ENCODE measurements at regions of chr12 and their contacts with region 1.

Region 1: DNA sequence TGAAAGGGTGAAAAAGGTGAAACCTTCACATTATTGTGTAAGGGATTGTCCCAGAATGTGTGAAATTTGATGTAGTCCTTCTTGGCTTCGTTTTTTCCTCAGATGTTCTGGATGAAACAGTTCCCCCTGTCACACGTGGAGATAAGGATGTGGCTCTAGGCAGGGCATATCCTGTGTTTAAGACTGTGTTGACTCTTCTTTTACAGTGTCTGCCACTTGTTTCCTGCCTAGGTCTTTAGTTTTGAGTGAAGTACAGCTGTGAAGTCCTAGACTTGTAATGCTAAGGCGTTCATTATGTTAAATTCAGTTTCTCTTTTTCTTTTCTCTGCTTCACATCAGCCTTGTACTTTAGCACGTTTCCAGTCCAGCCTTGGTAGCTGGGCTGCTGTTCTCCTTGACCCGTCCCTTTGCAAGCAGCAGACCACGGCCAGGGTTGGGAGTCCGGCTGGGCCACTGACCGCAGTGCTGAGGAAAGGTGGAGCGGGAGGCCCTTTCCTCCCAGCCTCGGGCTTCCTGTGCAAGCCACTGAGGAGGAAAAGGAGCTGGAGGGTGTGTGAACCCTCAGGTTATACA is 59.1 kb downstream of the RASSF3 start:
- DNase-seq: peak; percentile 82 to 87 (median 83)
- H3K4me3 ChIP-seq: peak overlapping the region; percentile 48 to 61
- H3K4me3 Mint-ChIP-seq: peak overlapping the region; percentile 88 to 96 (median 92)
- H3K27ac ChIP-seq: peak overlapping the region; percentile 77
- H3K27ac Mint-ChIP-seq: peak overlapping the region; percentile 92 to 99 (median 98)
- H3K4me1 ChIP-seq: peaks cover 100% of the 10 kb centered on the region
- H3K4me1 Mint-ChIP-seq: peaks cover 76 to 98% (median 87%) of the 10 kb centered on the region in 4 donors
- H3K27me3 ChIP-seq: no peaks in the 10 kb centered on the region
- H3K27me3 Mint-ChIP-seq: no peaks in the 10 kb centered on the region

Region 2: GRCh38 chr12:64551698-64552097 is 117.7 kb before region 1 on chr12:
- CTCF ChIA-PET with region 1: interaction called, 20 read pairs
- POLR2A ChIA-PET with region 1: interaction called, 4 read pairs
- intact Hi-C with region 1: no loop called
- DNase-seq: no peak
- H3K4me3 ChIP-seq: no peak overlapping the region
- H3K4me3 Mint-ChIP-seq: no peak overlapping the region
- H3K27ac ChIP-seq: no peak overlapping the region
- H3K27ac Mint-ChIP-seq: no peak overlapping the region
- H3K4me1 ChIP-seq: peaks cover 8% of the 10 kb centered on the region
- H3K4me1 Mint-ChIP-seq: peaks cover 5 to 9% (median 6%) of the 10 kb centered on the region in 4 donors
- H3K27me3 ChIP-seq: no peaks in the 10 kb centered on the region
- H3K27me3 Mint-ChIP-seq: no peaks in the 10 kb centered on the region

Region 3: DNA sequence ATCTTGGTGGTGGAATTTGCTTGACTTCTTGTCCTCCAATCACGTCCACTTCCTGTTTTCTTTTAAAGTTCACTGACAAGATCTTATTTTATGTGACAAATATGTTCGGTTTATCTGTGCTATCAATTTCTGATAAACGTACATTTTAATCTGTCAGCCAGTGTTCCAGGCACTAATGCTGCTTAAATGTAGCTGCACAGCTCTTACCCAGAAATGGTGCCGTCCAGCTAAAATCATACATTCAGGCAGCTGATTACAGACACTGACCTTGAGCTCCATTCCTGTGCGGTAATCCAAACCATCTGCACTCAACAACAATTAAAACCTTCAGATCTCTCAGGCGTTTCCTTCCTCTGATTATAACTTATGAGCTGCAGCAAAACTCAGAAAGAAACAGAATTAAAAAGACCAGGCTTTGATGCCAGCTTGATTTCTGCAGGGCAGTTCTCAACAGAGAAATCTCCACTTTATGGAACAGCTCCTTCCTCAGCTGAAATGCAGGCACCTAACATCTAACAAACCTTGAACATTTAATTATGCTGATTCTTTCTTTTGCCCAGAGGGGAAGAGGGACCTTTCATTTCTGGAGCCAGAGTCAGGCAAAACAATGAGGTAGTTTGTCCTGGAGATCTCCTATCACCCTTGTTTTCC is 85.5 kb before region 1 on chr12:
- CTCF ChIA-PET with region 1: interaction called, 5 read pairs
- POLR2A ChIA-PET with region 1: interaction called, 10 read pairs
- intact Hi-C with region 1: no loop called
- DNase-seq: peak in 4 of 5 donors; percentile 19 to 27 (median 24)
- H3K4me3 ChIP-seq: peak overlapping the region; percentile 36 to 55
- H3K4me3 Mint-ChIP-seq: peak overlapping the region; percentile 40 to 79 (median 74)
- H3K27ac ChIP-seq: peak overlapping the region; percentile 0
- H3K27ac Mint-ChIP-seq: peak overlapping the region; percentile 38 to 89 (median 75)
- H3K4me1 ChIP-seq: peaks cover 35% of the 10 kb centered on the region
- H3K4me1 Mint-ChIP-seq: peaks cover 21 to 40% (median 29%) of the 10 kb centered on the region in 4 donors
- H3K27me3 ChIP-seq: no peaks in the 10 kb centered on the region
- H3K27me3 Mint-ChIP-seq: no peaks in the 10 kb centered on the region

Region 4: DNA sequence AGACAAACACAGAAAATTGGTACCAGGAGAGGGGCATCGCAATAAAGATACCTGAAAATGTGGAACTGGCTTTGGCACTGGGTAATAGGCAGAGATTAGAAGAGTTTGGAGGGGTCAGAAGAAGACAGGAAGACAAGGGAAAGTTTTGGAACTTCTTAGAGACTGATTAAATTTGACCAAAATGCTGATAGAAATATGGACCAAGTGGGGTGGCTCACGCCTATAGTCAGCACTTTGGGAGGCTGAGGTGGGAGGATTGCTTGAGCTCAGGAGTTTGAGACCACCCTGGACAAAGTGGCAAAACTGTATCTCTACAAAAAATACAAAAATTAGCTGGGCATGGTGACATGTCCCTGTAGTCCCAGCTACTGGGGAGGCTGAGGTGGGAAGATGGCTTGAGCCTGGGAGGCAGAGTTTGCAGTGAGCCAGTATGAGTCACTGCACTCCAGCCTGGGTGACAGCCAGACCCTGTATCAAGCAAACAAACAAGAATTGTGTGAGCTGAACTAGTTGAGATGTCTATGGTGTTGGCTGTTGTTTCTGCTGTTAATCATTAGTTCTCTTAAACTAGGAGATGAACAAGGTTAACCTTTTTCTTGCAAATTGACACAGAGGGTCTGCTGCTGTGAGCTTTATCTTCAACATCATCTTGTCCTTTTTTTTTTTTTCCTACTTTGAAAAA is 35.6 kb before region 1 on chr12:
- CTCF ChIA-PET with region 1: interaction called, 7 read pairs
- POLR2A ChIA-PET with region 1: interaction called, 15 read pairs
- intact Hi-C with region 1: no loop called
- DNase-seq: peak in 1 of 5 donors; percentile 47
- H3K4me3 ChIP-seq: no peak overlapping the region
- H3K4me3 Mint-ChIP-seq: peak overlapping the region in 7 of 8 donors; percentile 5 to 73 (median 30)
- H3K27ac ChIP-seq: no peak overlapping the region
- H3K27ac Mint-ChIP-seq: peak overlapping the region; percentile 29 to 88 (median 77)
- H3K4me1 ChIP-seq: peaks cover 92% of the 10 kb centered on the region
- H3K4me1 Mint-ChIP-seq: peaks cover 60 to 92% (median 72%) of the 10 kb centered on the region in 4 donors
- H3K27me3 ChIP-seq: no peaks in the 10 kb centered on the region
- H3K27me3 Mint-ChIP-seq: no peaks in the 10 kb centered on the region

Region 5: GRCh38 chr12:64650762-64651161 is 18.6 kb before region 1 on chr12:
- CTCF ChIA-PET with region 1: interaction called, 3 read pairs
- POLR2A ChIA-PET with region 1: interaction called, 10 read pairs
- intact Hi-C with region 1: loop called (anchors 1 kb)
- DNase-seq: no peak
- H3K4me3 ChIP-seq: no peak overlapping the region
- H3K4me3 Mint-ChIP-seq: peak overlapping the region in 4 of 8 donors; percentile 10 to 49 (median 28)
- H3K27ac ChIP-seq: no peak overlapping the region
- H3K27ac Mint-ChIP-seq: peak overlapping the region; percentile 24 to 89 (median 77)
- H3K4me1 ChIP-seq: peaks cover 88% of the 10 kb centered on the region
- H3K4me1 Mint-ChIP-seq: peaks cover 59 to 88% (median 75%) of the 10 kb centered on the region in 4 donors
- H3K27me3 ChIP-seq: no peaks in the 10 kb centered on the region
- H3K27me3 Mint-ChIP-seq: no peaks in the 10 kb centered on the region

Region 6: GRCh38 chr12:64679487-64679983 is 10.2 kb after region 1 on chr12:
- CTCF ChIA-PET with region 1: interaction called, 85 read pairs
- POLR2A ChIA-PET with region 1: interaction called, 405 read pairs
- intact Hi-C with region 1: loop called (anchors 1 kb)
- DNase-seq: peak; percentile 73 to 86 (median 80)
- H3K4me3 ChIP-seq: peak overlapping the region in 1 of 2 donors; percentile 36
- H3K4me3 Mint-ChIP-seq: peak overlapping the region; percentile 76 to 85 (median 79)
- H3K27ac ChIP-seq: peak overlapping the region; percentile 75
- H3K27ac Mint-ChIP-seq: peak overlapping the region; percentile 94 to 98 (median 97)
- H3K4me1 ChIP-seq: peaks cover 99% of the 10 kb centered on the region
- H3K4me1 Mint-ChIP-seq: peaks cover 67 to 100% (median 86%) of the 10 kb centered on the region in 4 donors
- H3K27me3 ChIP-seq: no peaks in the 10 kb centered on the region
- H3K27me3 Mint-ChIP-seq: no peaks in the 10 kb centered on the region

Region 7: GRCh38 chr12:64687816-64688215 is 18.5 kb after region 1 on chr12:
- CTCF ChIA-PET with region 1: interaction called, 85 read pairs
- POLR2A ChIA-PET with region 1: interaction called, 405 read pairs
- intact Hi-C with region 1: loop called (anchors 1 kb)
- DNase-seq: no peak
- H3K4me3 ChIP-seq: no peak overlapping the region
- H3K4me3 Mint-ChIP-seq: peak overlapping the region; percentile 5 to 71 (median 67)
- H3K27ac ChIP-seq: peak overlapping the region; percentile 19
- H3K27ac Mint-ChIP-seq: peak overlapping the region; percentile 48 to 97 (median 88)
- H3K4me1 ChIP-seq: peaks cover 87% of the 10 kb centered on the region
- H3K4me1 Mint-ChIP-seq: peaks cover 60 to 83% (median 71%) of the 10 kb centered on the region in 4 donors
- H3K27me3 ChIP-seq: no peaks in the 10 kb centered on the region
- H3K27me3 Mint-ChIP-seq: no peaks in the 10 kb centered on the region

Region 8: GRCh38 chr12:64938175-64938574 is 268.8 kb after region 1 on chr12:
- CTCF ChIA-PET with region 1: no interaction called
- POLR2A ChIA-PET with region 1: no interaction called
- intact Hi-C with region 1: no loop called
- DNase-seq: no peak
- H3K4me3 ChIP-seq: no peak overlapping the region
- H3K4me3 Mint-ChIP-seq: no peak overlapping the region
- H3K27ac ChIP-seq: no peak overlapping the region
- H3K27ac Mint-ChIP-seq: no peak overlapping the region
- H3K4me1 ChIP-seq: no peaks in the 10 kb centered on the region
- H3K4me1 Mint-ChIP-seq: no peaks in the 10 kb centered on the region
- H3K27me3 ChIP-seq: no peaks in the 10 kb centered on the region
- H3K27me3 Mint-ChIP-seq: peaks cover 1 to 7% of the 10 kb centered on the region in 2 donors